ENCODE measurements at regions of chr9 and their contacts with region 1.

Region 1: GRCh38 chr9:89318123-89319014 is at the start of gene SECISBP2:
- DNase-seq: peak; percentile 95
- H3K4me3 Mint-ChIP-seq: peak within 1 kb of the TSS; percentile 89
- H3K27ac Mint-ChIP-seq: peak within 1 kb of the TSS; percentile 93
- H3K4me1 Mint-ChIP-seq: peaks cover 79% of the 10 kb centered on the region
- H3K27me3 Mint-ChIP-seq: no peaks in the 10 kb centered on the region
- total RNA-seq, gene SECISBP2: 42.8 to 45.8 TPM

Region 2: GRCh38 chr9:89093201-89093975 is 225.0 kb before region 1 on chr9:
- CTCF ChIA-PET with region 1: no interaction called
- intact Hi-C with region 1: no loop called
- DNase-seq: no peak
- H3K4me3 Mint-ChIP-seq: no peak overlapping the region
- H3K27ac Mint-ChIP-seq: no peak overlapping the region
- H3K4me1 Mint-ChIP-seq: peaks cover 4% of the 10 kb centered on the region
- H3K27me3 Mint-ChIP-seq: no peaks in the 10 kb centered on the region

Region 3: DNA sequence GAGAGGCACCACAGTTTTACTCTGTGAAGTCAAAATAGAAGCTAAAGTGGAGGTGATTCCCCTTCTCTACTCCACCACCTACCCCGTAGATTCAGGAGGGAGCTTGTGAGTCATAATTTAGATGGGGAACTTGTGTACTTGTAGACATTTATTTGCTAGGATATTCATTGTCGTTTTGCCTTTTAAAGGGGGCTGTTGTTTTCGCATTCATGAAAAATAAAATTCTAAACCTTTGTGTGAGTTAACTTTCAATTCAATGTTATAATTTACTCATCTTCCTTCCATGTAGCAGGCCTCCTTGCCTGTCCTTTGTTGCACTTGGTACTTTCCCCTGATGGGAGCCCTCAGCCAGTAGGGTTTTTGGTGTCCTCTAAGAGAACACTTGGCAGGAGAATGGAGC is 22.0 kb after region 1 on chr9:
- CTCF ChIA-PET with region 1: interaction called, 4 read pairs
- intact Hi-C with region 1: loop called (anchors 1 kb)
- DNase-seq: peak; percentile 31
- H3K4me3 Mint-ChIP-seq: no peak overlapping the region
- H3K27ac Mint-ChIP-seq: peak overlapping the region; percentile 67
- H3K4me1 Mint-ChIP-seq: peaks cover 48% of the 10 kb centered on the region
- H3K27me3 Mint-ChIP-seq: no peaks in the 10 kb centered on the region

Region 4: GRCh38 chr9:89497978-89498851 is 179.8 kb after region 1 on chr9 and contains the start of gene SEMA4D:
- CTCF ChIA-PET with region 1: no interaction called
- intact Hi-C with region 1: loop called (anchors 10 kb)
- DNase-seq: peak; percentile 84
- H3K4me3 Mint-ChIP-seq: peak within 1 kb of the TSS; percentile 89
- H3K27ac Mint-ChIP-seq: peak within 1 kb of the TSS; percentile 93
- H3K4me1 Mint-ChIP-seq: peaks cover 73% of the 10 kb centered on the region
- H3K27me3 Mint-ChIP-seq: no peaks in the 10 kb centered on the region
- total RNA-seq, gene SEMA4D: 156 to 160 TPM

Measured in activated naive CD4-positive, alpha-beta T cell treated with anti-CD3 and anti-CD28 coated beads for 36 hours (primary cell).